CD8-positive, alpha-beta T cell (primary cell): ENCODE measurements at regions of chr1 and their contacts with region 1.

Region 1: GRCh38 chr1:243850452-243851256 is 611 bp upstream of the AKT3 start:
- DNase-seq: peak in 8 of 9 experiments; percentile 71 to 92 (median 84)
- ATAC-seq: peak; percentile 44
- H3K4me3 ChIP-seq: peak overlapping the region; percentile 53 to 66
- H3K4me3 Mint-ChIP-seq: peak overlapping the region; percentile 93
- H3K27ac ChIP-seq: peak overlapping the region; percentile 80 to 82
- H3K27ac Mint-ChIP-seq: peak overlapping the region; percentile 96
- H3K4me1 ChIP-seq: peaks cover 24% of the 10 kb centered on the region
- H3K4me1 Mint-ChIP-seq: peaks cover 38% of the 10 kb centered on the region
- H3K27me3 ChIP-seq: no peaks in the 10 kb centered on the region
- H3K27me3 Mint-ChIP-seq: peaks cover 2% of the 10 kb centered on the region
- CTCF ChIP-seq: no peak

Region 2: GRCh38 chr1:243605604-243606003 is 245.1 kb before region 1 on chr1:
- CTCF ChIA-PET with region 1: no interaction called
- POLR2A ChIA-PET with region 1: no interaction called
- intact Hi-C with region 1: no loop called
- DNase-seq: no peak
- ATAC-seq: no peak
- H3K4me3 ChIP-seq: no peak overlapping the region
- H3K4me3 Mint-ChIP-seq: no peak overlapping the region
- H3K27ac ChIP-seq: no peak overlapping the region
- H3K27ac Mint-ChIP-seq: peak overlapping the region; percentile 34
- H3K4me1 ChIP-seq: no peaks in the 10 kb centered on the region
- H3K4me1 Mint-ChIP-seq: no peaks in the 10 kb centered on the region
- H3K27me3 ChIP-seq: no peaks in the 10 kb centered on the region
- H3K27me3 Mint-ChIP-seq: no peaks in the 10 kb centered on the region
- CTCF ChIP-seq: no peak

Region 3: DNA sequence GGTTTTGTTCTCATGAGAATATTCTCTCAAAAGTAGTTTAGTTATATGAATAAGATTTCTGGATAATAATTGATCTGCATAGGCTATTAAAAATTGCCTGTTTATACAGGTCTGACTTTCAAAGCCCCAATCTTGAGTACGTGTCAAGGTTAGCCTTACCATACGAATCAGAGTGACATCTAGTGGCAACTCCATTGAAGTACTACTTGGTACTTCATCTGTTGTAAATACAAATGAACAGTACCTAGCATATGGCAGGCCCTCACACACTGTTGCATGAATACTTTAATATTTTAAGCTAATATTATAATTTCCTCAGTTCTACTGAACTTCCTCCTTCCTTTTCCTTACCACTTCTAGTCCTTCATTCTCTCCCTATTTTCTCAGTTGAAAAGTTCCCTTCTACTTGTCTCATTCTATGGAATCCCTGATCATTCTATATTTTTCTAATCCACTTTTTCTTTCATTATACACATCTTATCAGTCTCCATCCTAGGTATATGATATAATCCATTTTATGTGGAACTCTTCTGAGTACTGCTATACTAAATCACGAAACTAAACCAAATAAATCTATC is 101.9 kb before region 1 on chr1:
- CTCF ChIA-PET with region 1: no interaction called
- POLR2A ChIA-PET with region 1: no interaction called
- intact Hi-C with region 1: loop called in 1 of 2 experiments (anchors 5 kb)
- DNase-seq: peak in 3 of 9 experiments; percentile 29 to 79 (median 72)
- ATAC-seq: peak; percentile 99
- H3K4me3 ChIP-seq: no peak overlapping the region
- H3K4me3 Mint-ChIP-seq: no peak overlapping the region
- H3K27ac ChIP-seq: no peak overlapping the region
- H3K27ac Mint-ChIP-seq: no peak overlapping the region
- H3K4me1 ChIP-seq: peaks cover 8% of the 10 kb centered on the region
- H3K4me1 Mint-ChIP-seq: peaks cover 32% of the 10 kb centered on the region
- H3K27me3 ChIP-seq: no peaks in the 10 kb centered on the region
- H3K27me3 Mint-ChIP-seq: no peaks in the 10 kb centered on the region
- CTCF ChIP-seq: peak; percentile 93

Region 4: DNA sequence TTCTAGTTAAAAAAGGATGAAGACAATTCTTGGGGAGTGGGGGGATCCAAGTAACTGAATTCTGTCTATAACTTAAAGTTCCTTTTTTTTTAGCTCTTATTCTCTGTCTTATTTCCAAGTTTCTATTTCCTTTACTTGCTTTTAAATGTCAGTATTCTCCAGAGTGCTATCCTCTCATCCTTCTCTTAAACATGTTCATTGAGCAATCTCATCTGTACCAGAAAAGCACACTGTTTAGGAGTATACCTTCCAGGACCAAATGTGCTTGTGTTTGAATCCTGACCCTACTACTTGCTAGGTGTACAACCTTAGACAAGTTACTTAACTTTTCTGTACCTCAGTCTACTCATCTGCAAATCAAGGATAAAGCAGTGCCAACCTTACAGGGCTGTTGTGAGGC is 50.7 kb before region 1 on chr1:
- CTCF ChIA-PET with region 1: no interaction called
- POLR2A ChIA-PET with region 1: no interaction called
- intact Hi-C with region 1: loop called (anchors 5 kb)
- DNase-seq: no peak
- ATAC-seq: no peak
- H3K4me3 ChIP-seq: no peak overlapping the region
- H3K4me3 Mint-ChIP-seq: no peak overlapping the region
- H3K27ac ChIP-seq: no peak overlapping the region
- H3K27ac Mint-ChIP-seq: no peak overlapping the region
- H3K4me1 ChIP-seq: peaks cover 15% of the 10 kb centered on the region
- H3K4me1 Mint-ChIP-seq: peaks cover 51% of the 10 kb centered on the region
- H3K27me3 ChIP-seq: no peaks in the 10 kb centered on the region
- H3K27me3 Mint-ChIP-seq: no peaks in the 10 kb centered on the region
- CTCF ChIP-seq: no peak

Region 5: DNA sequence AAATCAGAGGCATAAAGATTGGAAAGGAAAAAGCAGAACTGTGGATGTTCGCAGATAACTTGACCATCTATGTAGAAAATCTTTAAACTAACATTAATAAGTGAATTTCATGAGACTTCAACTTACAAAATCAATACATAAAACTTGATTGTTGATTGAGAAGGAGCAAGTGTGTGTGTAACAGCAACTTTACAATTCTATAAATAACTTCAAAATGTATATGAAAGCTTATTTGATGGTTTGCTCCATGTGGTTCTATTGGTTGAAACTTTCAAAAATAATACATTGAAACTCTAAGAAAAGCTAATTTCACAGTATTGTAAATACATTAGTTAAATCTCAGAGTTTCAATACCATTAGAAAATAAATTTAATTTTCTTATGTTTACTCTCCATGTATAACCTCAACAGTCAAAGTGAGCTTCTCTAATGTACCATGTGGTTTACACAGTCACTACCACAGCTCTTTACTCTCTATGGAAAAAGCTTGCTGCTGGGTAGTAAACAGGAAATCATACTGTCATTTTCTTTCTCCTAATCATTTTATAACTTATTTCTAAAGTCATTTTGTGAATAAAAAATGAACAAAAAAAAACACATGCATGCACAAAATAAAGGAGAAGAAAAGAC is 12.6 kb before region 1 on chr1:
- CTCF ChIA-PET with region 1: interaction called, 3 read pairs
- POLR2A ChIA-PET with region 1: no interaction called
- intact Hi-C with region 1: loop called (anchors 1 kb)
- DNase-seq: peak in 2 of 9 experiments; percentile 50 to 67
- ATAC-seq: peak; percentile 89
- H3K4me3 ChIP-seq: no peak overlapping the region
- H3K4me3 Mint-ChIP-seq: peak overlapping the region; percentile 40
- H3K27ac ChIP-seq: peak overlapping the region in 1 of 2 experiments; percentile 58
- H3K27ac Mint-ChIP-seq: peak overlapping the region; percentile 86
- H3K4me1 ChIP-seq: peaks cover 20% of the 10 kb centered on the region
- H3K4me1 Mint-ChIP-seq: peaks cover 47% of the 10 kb centered on the region
- H3K27me3 ChIP-seq: no peaks in the 10 kb centered on the region
- H3K27me3 Mint-ChIP-seq: no peaks in the 10 kb centered on the region
- CTCF ChIP-seq: no peak

Region 6: GRCh38 chr1:244074559-244075171 is 224.0 kb after region 1 on chr1:
- CTCF ChIA-PET with region 1: no interaction called
- POLR2A ChIA-PET with region 1: interaction called, 6 read pairs
- intact Hi-C with region 1: loop called in 1 of 2 experiments (anchors 10 kb)
- DNase-seq: peak; percentile 47 to 92 (median 74)
- ATAC-seq: peak; percentile 90
- H3K4me3 ChIP-seq: peak overlapping the region; percentile 38 to 41
- H3K4me3 Mint-ChIP-seq: peak overlapping the region; percentile 80
- H3K27ac ChIP-seq: peak overlapping the region; percentile 66 to 67
- H3K27ac Mint-ChIP-seq: peak overlapping the region; percentile 98
- H3K4me1 ChIP-seq: peaks cover 31% of the 10 kb centered on the region
- H3K4me1 Mint-ChIP-seq: peaks cover 45% of the 10 kb centered on the region
- H3K27me3 ChIP-seq: no peaks in the 10 kb centered on the region
- H3K27me3 Mint-ChIP-seq: no peaks in the 10 kb centered on the region
- CTCF ChIP-seq: no peak

Region 7: GRCh38 chr1:244652699-244653466 is 802.2 kb after region 1 on chr1 and contains the start of gene DESI2:
- CTCF ChIA-PET with region 1: no interaction called
- POLR2A ChIA-PET with region 1: no interaction called
- intact Hi-C with region 1: loop called in 1 of 2 experiments (anchors 5 kb)
- DNase-seq: peak; percentile 95 to 100 (median 97)
- ATAC-seq: peak; percentile 92
- H3K4me3 ChIP-seq: peak within 1 kb of the TSS; percentile 67 to 95
- H3K4me3 Mint-ChIP-seq: no peak within 1 kb of the TSS
- H3K27ac ChIP-seq: peak within 1 kb of the TSS; percentile 68 to 73
- H3K27ac Mint-ChIP-seq: peak within 1 kb of the TSS; percentile 86
- H3K4me1 ChIP-seq: peaks cover 22% of the 10 kb centered on the region
- H3K4me1 Mint-ChIP-seq: peaks cover 26% of the 10 kb centered on the region
- H3K27me3 ChIP-seq: no peaks in the 10 kb centered on the region
- H3K27me3 Mint-ChIP-seq: no peaks in the 10 kb centered on the region
- CTCF ChIP-seq: peak; percentile 39
- total RNA-seq, gene DESI2: 14.5 to 16.2 TPM